GM23248 (cell line): ENCODE measurements at regions of chr5 and their contacts with region 1.

Region 1: GRCh38 chr5:36739751-36740221 is 133.4 kb downstream of the SLC1A3 start:
- DNase-seq: peak; percentile 70
- H3K4me3 ChIP-seq: no peak overlapping the region
- H3K27ac ChIP-seq: no peak overlapping the region
- H3K4me1 ChIP-seq: 0 out of 2 replicates have a peak, but pooled peaks cover 7% of the 10 kb centered on the region
- H3K27me3 ChIP-seq: no peaks in the 10 kb centered on the region; the same call in 1 of the 2 replicates

Region 2: DNA sequence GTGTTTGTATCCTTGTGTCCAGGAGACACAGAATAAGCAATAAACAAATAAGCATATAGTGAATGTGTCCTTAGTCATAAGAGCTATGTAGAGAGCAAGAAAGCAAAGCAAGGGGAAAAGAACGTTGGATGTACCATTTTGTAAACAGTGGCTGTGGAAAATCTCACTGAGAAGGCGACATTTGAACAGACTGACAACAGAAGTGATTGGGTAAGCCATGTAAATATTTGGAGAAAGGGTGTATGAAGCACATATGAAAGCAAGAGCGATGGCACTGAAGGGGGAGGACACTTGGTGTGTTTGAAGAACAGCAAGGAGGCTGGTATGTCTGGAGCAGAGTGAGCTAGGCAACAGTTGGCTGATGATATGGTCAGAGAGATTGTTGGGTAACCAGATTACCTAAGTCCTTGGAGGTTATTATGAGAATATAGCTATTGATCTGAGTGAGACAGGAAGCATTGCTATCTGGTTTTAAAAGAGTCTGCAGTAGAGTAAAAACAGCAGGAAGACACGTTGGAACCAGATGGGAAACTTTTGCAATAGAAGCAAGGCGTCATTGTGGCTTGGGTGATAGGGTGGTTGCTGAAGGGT is 998.6 kb before region 1 on chr5:
- in situ Hi-C with region 1: no loop called
- DNase-seq: peak; percentile 73
- H3K4me3 ChIP-seq: no peak overlapping the region
- H3K27ac ChIP-seq: peak overlapping the region; percentile 56
- H3K4me1 ChIP-seq: peaks cover 16% of the 10 kb centered on the region
- H3K27me3 ChIP-seq: no peaks in the 10 kb centered on the region

Region 3: DNA sequence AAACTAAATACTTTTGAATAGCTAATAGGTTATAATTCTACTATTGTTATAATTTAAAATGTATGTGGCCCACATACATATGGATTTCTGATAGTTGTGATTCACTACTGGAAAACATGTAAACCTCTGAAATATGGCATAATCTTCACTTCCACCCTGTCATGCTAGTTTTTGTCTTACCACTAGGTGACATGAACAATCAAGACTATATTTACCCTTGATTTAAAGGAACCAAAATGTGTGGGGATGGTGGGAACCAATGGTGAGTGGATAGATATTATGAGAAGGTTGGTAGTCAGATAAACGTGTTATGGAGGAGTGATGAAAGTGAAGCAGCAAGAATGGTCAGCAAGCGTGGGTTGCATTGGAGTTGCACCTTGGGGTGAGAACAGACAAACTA is 126.4 kb after region 1 on chr5:
- in situ Hi-C with region 1: loop called (anchors 10 kb)
- DNase-seq: no peak
- H3K4me3 ChIP-seq: no peak overlapping the region
- H3K27ac ChIP-seq: no peak overlapping the region
- H3K4me1 ChIP-seq: no peaks in the 10 kb centered on the region
- H3K27me3 ChIP-seq: no peaks in the 10 kb centered on the region

Region 4: GRCh38 chr5:37005946-37006540 is 266.3 kb after region 1 on chr5:
- in situ Hi-C with region 1: loop called (anchors 10 kb)
- DNase-seq: peak; percentile 58
- H3K4me3 ChIP-seq: peak overlapping the region; percentile 34; the same call in 1 of the 2 replicates
- H3K27ac ChIP-seq: peak overlapping the region; percentile 56
- H3K4me1 ChIP-seq: peaks cover 14% of the 10 kb centered on the region
- H3K27me3 ChIP-seq: no peaks in the 10 kb centered on the region